ENCODE measurements at regions of chr3 and their contacts with region 1.

Region 1: GRCh38 chr3:108292905-108293328 is 3.4 kb upstream of the HHLA2 start:
- DNase-seq: peak; percentile 69
- ATAC-seq: peak; percentile 90
- H3K4me3 ChIP-seq: peak overlapping the region; percentile 2; the same call in 1 of the 2 replicates
- H3K27ac ChIP-seq: peak overlapping the region; percentile 48
- H3K4me1 ChIP-seq: peaks cover 30% of the 10 kb centered on the region
- H3K27me3 ChIP-seq: no peaks in the 10 kb centered on the region
- CTCF ChIP-seq: no peak
- EP300 ChIP-seq: peak; percentile 26 to 44; a peak in 1 of 4 replicates
- POLR2A ChIP-seq: no peak
- RAD21 ChIP-seq: no peak

Region 2: GRCh38 chr3:108315767-108316301 is 22.9 kb after region 1 on chr3:
- CTCF ChIA-PET with region 1: interaction called, 4 read pairs
- POLR2A ChIA-PET with region 1: no interaction called
- RAD21 ChIA-PET with region 1: interaction called, 3 read pairs
- SMC1A ChIA-PET with region 1: interaction called, 11 read pairs
- in situ Hi-C with region 1: no loop called
- intact Hi-C with region 1: no loop called
- DNase-seq: no peak
- ATAC-seq: no peak
- H3K4me3 ChIP-seq: no peak overlapping the region
- H3K27ac ChIP-seq: no peak overlapping the region
- H3K4me1 ChIP-seq: no peaks in the 10 kb centered on the region
- H3K27me3 ChIP-seq: peaks cover 0 to 2% of the 10 kb centered on the region in 2 experiments; a peak in 1 of 4 replicates
- CTCF ChIP-seq: no peak
- EP300 ChIP-seq: no peak
- POLR2A ChIP-seq: no peak
- RAD21 ChIP-seq: no peak

Region 3: GRCh38 chr3:108388136-108389132 is 95.5 kb after region 1 on chr3:
- CTCF ChIA-PET with region 1: interaction called, 4 read pairs
- POLR2A ChIA-PET with region 1: no interaction called
- RAD21 ChIA-PET with region 1: interaction called, 5 read pairs
- SMC1A ChIA-PET with region 1: interaction called, 3 read pairs
- in situ Hi-C with region 1: no loop called
- intact Hi-C with region 1: loop called (anchors 5 kb)
- DNase-seq: peak; percentile 70
- ATAC-seq: peak; percentile 84
- H3K4me3 ChIP-seq: peak overlapping the region; percentile 42
- H3K27ac ChIP-seq: peak overlapping the region; percentile 33; the same call in 1 of the 2 replicates
- H3K4me1 ChIP-seq: peaks cover 33% of the 10 kb centered on the region
- H3K27me3 ChIP-seq: no peaks in the 10 kb centered on the region
- CTCF ChIP-seq: no peak
- EP300 ChIP-seq: peak; percentile 38 to 48; a peak in 1 of 4 replicates
- POLR2A ChIP-seq: no peak
- RAD21 ChIP-seq: no peak

Measured in GM12878 (cell line).